ENCODE measurements at regions of chr12 and their contacts with region 1.

Region 1: DNA sequence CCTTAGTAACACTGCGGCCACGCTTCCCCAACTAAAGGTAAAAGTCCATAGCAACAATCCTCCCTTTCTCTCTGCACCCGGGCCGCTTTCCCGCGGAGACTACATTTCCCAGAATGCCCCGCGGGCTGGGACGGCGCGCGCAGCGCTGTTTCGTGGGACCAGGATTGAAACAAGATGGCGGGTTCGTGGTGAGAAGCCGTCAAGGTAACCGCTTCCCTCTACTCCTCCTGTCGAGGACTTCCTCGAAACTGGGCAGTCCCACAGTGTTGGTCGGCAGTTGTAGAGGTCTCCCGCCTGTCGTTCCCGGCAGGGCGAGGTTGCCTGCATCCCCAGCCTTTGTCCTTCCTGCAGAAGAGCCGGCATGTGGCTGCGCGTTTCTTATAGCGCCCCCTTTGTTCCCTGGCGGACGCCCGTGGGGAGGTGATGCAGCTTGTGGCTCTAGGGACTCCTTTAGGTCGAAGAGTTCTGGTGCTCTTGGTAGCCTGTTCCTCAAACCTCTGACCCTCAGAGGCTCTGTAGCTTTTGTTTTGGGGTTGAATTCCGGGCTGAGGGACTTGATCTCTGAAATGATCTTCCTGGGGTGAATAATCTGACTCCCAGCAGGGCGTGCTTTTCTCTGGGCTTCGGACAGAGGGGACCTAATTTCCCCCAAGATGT is at the start of gene MRPL42:
- DNase-seq: peak; percentile 92 to 95
- H3K4me3 ChIP-seq: peak within 1 kb of the TSS; percentile 75
- H3K4me3 Mint-ChIP-seq: peak within 1 kb of the TSS; percentile 92
- H3K27ac Mint-ChIP-seq: peak within 1 kb of the TSS; percentile 93
- H3K4me1 ChIP-seq: peaks cover 11% of the 10 kb centered on the region; the same call in 1 of the 2 replicates
- H3K4me1 Mint-ChIP-seq: peaks cover 11% of the 10 kb centered on the region
- H3K27me3 ChIP-seq: no peaks in the 10 kb centered on the region
- H3K27me3 Mint-ChIP-seq: no peaks in the 10 kb centered on the region
- CTCF ChIP-seq: peak; percentile 73 to 87
- total RNA-seq, gene MRPL42: 77.0 and 78.2 TPM in 2 replicates

Region 2: DNA sequence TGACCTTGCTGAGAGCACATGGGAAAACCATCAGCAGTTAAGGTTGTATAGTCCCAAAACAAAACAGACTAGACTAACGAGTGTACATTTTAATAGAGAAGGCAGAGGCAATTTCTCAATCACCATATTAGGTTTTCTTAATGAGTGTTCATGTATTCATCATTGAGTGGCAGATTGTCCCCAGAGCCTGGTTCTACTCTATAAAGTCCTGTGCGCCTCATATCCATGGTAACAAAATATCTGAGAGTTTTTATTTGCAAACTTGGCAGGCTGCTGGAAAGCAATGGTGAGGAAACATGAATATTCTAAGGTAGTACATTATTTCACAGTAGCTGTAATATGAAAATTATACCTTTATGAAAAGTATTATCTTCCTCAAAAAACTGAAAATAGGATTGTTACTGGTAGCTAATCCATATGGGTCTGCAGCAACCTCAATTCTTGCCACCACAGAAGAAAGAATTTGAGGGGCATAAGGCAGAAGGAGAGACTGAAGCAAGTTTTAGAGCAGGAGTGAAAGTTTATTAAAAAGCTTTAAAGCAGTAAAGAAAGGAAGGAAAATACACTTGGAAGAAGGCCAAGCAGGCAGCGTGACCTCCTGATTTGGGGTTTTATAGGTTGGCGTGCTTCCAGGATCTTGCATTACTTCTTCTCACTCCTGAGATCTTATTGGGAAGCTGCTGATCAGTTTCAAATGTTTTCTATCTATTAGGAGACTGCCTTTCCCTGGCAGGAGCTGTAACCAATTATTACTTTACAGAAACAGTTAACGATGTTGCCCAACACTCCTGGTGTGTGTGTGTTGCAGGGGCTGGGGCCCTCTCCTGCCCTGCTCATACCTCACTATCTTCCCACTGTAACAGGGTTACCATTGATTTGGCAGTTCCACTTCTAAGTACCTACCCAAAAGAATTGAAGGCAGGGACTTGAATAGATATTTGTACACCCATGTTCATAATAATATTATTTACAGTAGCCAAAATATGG is 243.7 kb before region 1 on chr12:
- CTCF ChIA-PET with region 1: no interaction called
- POLR2A ChIA-PET with region 1: no interaction called
- intact Hi-C with region 1: no loop called
- DNase-seq: no peak
- H3K4me3 ChIP-seq: no peak overlapping the region
- H3K4me3 Mint-ChIP-seq: no peak overlapping the region
- H3K27ac Mint-ChIP-seq: no peak overlapping the region
- H3K4me1 ChIP-seq: no peaks in the 10 kb centered on the region
- H3K4me1 Mint-ChIP-seq: no peaks in the 10 kb centered on the region
- H3K27me3 ChIP-seq: no peaks in the 10 kb centered on the region
- H3K27me3 Mint-ChIP-seq: no peaks in the 10 kb centered on the region
- CTCF ChIP-seq: no peak

Region 3: GRCh38 chr12:93441617-93442410 is 25.7 kb before region 1 on chr12 and contains the start of gene UBE2N:
- CTCF ChIA-PET with region 1: interaction called, 4 read pairs
- POLR2A ChIA-PET with region 1: no interaction called
- intact Hi-C with region 1: loop called (anchors 1 kb)
- DNase-seq: peak; percentile 96 to 98
- H3K4me3 ChIP-seq: peak within 1 kb of the TSS; percentile 93
- H3K4me3 Mint-ChIP-seq: peak within 1 kb of the TSS; percentile 98
- H3K27ac Mint-ChIP-seq: peak within 1 kb of the TSS; percentile 99
- H3K4me1 ChIP-seq: peaks cover 17% of the 10 kb centered on the region
- H3K4me1 Mint-ChIP-seq: peaks cover 44% of the 10 kb centered on the region
- H3K27me3 ChIP-seq: no peaks in the 10 kb centered on the region
- H3K27me3 Mint-ChIP-seq: no peaks in the 10 kb centered on the region
- CTCF ChIP-seq: no peak
- total RNA-seq, gene UBE2N: 146 and 153 TPM in 2 replicates

Region 4: DNA sequence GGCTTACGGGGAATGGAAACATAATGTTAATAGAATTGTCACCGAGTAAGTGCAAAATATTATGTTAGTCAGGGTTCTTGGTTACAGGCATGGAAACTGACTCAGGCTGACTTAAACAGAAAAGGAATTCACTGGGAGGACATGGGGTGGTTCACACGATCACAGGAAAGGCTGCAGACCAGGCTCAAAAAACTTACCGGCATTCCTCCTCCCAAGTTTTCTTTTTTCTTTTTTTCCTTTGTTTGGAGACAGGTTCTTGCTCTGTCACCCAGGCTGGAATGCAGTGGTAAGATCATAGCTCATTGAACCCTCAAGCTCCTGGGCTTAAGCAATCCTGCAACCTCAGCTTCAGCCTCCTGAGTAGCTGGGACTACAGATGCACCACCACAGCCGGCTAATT is 13.8 kb before region 1 on chr12:
- CTCF ChIA-PET with region 1: no interaction called
- POLR2A ChIA-PET with region 1: interaction called, 16 read pairs
- intact Hi-C with region 1: no loop called
- DNase-seq: no peak
- H3K4me3 ChIP-seq: no peak overlapping the region
- H3K4me3 Mint-ChIP-seq: no peak overlapping the region
- H3K27ac Mint-ChIP-seq: no peak overlapping the region
- H3K4me1 ChIP-seq: no peaks in the 10 kb centered on the region
- H3K4me1 Mint-ChIP-seq: no peaks in the 10 kb centered on the region
- H3K27me3 ChIP-seq: no peaks in the 10 kb centered on the region
- H3K27me3 Mint-ChIP-seq: no peaks in the 10 kb centered on the region
- CTCF ChIP-seq: no peak

Region 5: DNA sequence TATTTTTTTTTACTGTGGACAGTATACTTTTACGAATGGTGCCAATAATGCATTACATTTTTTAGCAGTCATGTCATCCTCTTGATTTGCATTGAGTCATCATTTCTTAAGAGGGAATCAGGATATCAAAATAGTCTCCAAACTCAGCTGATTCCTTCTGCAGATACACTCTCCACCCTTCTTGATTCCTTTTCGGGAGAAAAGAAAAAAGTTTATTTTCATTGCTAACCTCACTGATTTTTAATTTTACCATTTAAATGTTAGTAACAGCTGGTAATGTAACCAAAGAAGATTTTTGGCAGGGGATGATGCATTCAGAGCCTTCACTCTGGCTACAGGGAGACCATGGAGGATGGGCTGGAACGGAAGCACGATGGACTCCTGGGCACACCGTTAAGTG is 47.4 kb after region 1 on chr12:
- CTCF ChIA-PET with region 1: no interaction called
- POLR2A ChIA-PET with region 1: no interaction called
- intact Hi-C with region 1: no loop called
- DNase-seq: no peak
- H3K4me3 ChIP-seq: no peak overlapping the region
- H3K4me3 Mint-ChIP-seq: no peak overlapping the region
- H3K27ac Mint-ChIP-seq: no peak overlapping the region
- H3K4me1 ChIP-seq: 0 out of 2 replicates have a peak, but pooled peaks cover 7% of the 10 kb centered on the region
- H3K4me1 Mint-ChIP-seq: peaks cover 13% of the 10 kb centered on the region
- H3K27me3 ChIP-seq: no peaks in the 10 kb centered on the region
- H3K27me3 Mint-ChIP-seq: no peaks in the 10 kb centered on the region
- CTCF ChIP-seq: no peak